OCI-LY7 (cell line): ENCODE measurements at regions of chr6 and their contacts with region 1.

Region 1: DNA sequence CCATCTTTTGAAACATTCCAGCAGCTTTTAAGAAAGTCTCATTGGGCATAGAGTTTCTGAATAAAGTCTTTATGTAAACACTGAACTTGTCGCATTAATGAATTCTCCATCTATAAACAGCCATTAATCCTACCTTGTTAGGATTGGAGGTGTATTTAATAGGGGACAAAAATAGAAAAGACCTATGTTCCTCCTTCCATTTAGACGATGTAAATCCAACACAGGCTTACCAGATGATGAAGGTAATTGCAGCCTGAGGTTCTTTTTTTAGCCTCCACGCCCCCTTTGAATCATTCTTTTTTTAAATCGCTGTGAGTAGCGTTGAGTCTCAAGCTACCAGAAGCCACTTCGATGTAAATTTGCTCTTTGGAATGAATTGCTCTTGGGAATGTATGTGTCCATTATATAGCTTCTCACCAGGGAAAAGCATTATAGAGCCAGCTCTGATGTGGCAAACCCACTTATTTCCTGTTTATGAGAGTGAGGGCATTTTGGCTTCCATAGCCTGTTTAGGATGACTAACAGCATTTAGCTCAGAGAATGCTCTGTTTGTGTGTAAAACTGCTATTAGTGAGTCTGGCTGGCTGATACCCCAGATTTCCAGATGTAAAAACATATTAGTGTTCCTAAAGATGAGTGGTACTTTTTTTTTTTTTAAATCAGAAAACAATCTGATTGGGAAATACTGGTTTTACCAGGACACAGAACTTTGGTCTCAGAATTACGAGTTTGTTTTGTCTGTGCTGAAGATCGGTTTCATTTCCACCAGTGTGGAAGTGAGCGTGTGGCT is 74.9 kb upstream of the CLDN20 start:
- DNase-seq: no peak
- H3K4me3 ChIP-seq: no peak overlapping the region
- H3K27ac ChIP-seq: no peak overlapping the region
- H3K4me1 ChIP-seq: peaks cover 27% of the 10 kb centered on the region
- CTCF ChIP-seq: no peak

Region 2: GRCh38 chr6:155201461-155202226 is 12.7 kb after region 1 on chr6:
- CTCF ChIA-PET with region 1: no interaction called
- POLR2A ChIA-PET with region 1: interaction called, 10 read pairs
- intact Hi-C with region 1: no loop called
- DNase-seq: no peak
- H3K4me3 ChIP-seq: no peak overlapping the region
- H3K27ac ChIP-seq: no peak overlapping the region
- H3K4me1 ChIP-seq: peaks cover 12% of the 10 kb centered on the region
- CTCF ChIP-seq: no peak